Sciatic nerve (tissue), 2 donors: ENCODE measurements at regions of chr3 and their contacts with region 1.

Region 1: GRCh38 chr3:42749753-42750231 is 23.3 kb downstream of the CCDC13 start:
- DNase-seq: no peak
- ATAC-seq: peak; percentile 29

Region 2: GRCh38 chr3:42581709-42582473 is 167.9 kb before region 1 on chr3 and contains the start of gene SEC22C:
- intact Hi-C with region 1: loop called (anchors 5 kb)
- DNase-seq: peak; percentile 96
- ATAC-seq: peak; percentile 99
- total RNA-seq, gene SEC22C: 59.5 TPM

Region 3: GRCh38 chr3:42600111-42600988 is 149.4 kb before region 1 on chr3 and contains the start of gene NKTR:
- intact Hi-C with region 1: loop called (anchors 10 kb)
- DNase-seq: peak; percentile 99
- ATAC-seq: peak; percentile 96
- total RNA-seq, gene NKTR: 149 TPM

Region 4: GRCh38 chr3:42652611-42653302 is 97.0 kb before region 1 on chr3:
- intact Hi-C with region 1: loop called (anchors 5 kb)
- DNase-seq: peak; percentile 77
- ATAC-seq: peak; percentile 57